ENCODE measurements at regions of chrX and their contacts with region 1.

Region 1: DNA sequence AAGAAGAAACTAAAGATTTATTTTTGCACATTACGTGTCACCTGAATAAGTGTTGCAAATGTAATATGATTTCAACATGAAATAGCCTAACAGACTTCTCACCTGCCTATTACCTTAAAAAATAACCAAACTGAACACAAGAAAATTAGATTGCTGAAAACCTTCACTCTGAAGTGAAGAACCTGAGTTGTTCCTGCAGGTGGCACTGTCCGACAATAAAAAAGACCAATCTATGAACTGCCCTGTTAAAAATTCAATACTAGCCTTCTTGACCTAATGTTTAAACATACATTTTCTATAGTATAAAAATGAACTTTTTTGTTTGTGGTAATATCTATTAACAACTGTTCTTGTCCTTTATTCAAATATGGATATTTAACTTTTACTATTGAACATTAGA is 69.2 kb upstream of the PNPLA4 start:
- DNase-seq: no peak

Region 2: GRCh38 chrX:8364369-8365141 is 368.1 kb after region 1 on chrX:
- intact Hi-C with region 1: loop called (anchors 10 kb)
- DNase-seq: no peak

Region 3: DNA sequence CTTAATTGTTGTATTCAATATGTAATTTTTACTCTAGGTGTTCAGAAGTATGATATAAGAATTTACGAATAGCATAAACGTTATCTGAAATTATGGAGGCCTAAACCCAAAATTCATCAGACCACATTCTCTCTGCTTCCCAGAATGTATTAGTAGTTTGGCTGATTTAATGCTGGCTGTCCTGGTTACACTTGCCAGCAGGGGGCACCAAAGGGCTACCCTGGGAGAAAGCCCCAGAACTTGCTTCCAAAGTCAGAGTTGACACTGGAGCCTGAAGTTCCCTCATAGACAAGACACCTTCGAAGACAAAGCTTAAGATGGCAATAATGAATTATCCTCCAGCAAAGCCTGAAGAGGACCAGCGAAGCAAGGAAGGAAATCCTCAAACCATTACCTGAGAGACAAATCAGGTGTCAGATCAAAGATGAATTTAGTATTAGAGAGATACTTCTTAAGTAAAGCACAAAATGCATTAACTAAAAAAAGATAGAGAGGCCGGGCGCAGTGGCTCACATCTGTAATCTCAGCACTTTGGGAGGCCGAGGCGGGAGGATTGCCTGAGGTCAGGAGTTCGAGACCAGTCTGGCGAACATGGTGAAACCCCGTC is 746.8 kb after region 1 on chrX:
- intact Hi-C with region 1: loop called (anchors 5 kb)
- DNase-seq: no peak

Region 4: DNA sequence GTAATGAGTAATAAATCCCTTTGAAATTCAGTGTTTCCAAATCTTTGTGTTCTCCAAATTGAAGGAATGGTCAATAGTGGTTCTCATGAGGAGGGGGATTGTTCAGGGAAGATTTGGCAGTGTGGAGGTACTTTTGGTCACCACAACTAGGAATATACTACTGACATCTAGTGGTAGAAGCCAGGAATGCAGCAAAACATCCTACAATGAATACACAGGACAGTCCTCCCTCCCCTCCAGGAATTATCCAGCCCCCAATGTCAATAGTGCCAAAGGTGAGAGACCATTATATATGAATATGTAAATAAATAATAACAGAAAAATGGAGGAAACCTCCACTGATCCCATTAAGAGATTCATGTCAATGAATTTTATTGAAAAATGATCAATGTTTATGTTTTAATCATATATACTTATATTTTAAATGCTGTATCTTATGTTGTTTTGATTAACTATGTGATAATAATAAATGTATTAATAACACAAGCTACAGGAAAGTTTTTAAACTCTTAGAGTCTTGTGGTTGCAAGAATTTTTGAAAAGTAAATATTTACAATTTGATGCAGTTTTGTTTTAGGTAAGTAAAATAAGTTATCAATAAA is 819.2 kb after region 1 on chrX:
- intact Hi-C with region 1: loop called (anchors 10 kb)
- DNase-seq: no peak